Activated T-helper 2 cell treated with anti-CD3 and anti-CD28 coated beads, Interferon-gamma antibody, Interleukin-2, Interleukin-4, amounts not matched to agents 10 μg/mL and 5 μg/mL and 100 μg/mL, durations not matched to agents 14 hours and 24 hours and 36 hours (primary cell): ENCODE measurements at regions of chr19 and their contacts with region 1.

Region 1: GRCh38 chr19:54390942-54391577 is 24.2 kb upstream of the TTYH1 start:
- DNase-seq: peak; percentile 46
- H3K4me3 Mint-ChIP-seq: peak overlapping the region; percentile 27
- H3K27ac Mint-ChIP-seq: no peak overlapping the region
- H3K4me1 Mint-ChIP-seq: peaks cover 31% of the 10 kb centered on the region
- H3K27me3 Mint-ChIP-seq: peaks cover 6% of the 10 kb centered on the region

Region 2: DNA sequence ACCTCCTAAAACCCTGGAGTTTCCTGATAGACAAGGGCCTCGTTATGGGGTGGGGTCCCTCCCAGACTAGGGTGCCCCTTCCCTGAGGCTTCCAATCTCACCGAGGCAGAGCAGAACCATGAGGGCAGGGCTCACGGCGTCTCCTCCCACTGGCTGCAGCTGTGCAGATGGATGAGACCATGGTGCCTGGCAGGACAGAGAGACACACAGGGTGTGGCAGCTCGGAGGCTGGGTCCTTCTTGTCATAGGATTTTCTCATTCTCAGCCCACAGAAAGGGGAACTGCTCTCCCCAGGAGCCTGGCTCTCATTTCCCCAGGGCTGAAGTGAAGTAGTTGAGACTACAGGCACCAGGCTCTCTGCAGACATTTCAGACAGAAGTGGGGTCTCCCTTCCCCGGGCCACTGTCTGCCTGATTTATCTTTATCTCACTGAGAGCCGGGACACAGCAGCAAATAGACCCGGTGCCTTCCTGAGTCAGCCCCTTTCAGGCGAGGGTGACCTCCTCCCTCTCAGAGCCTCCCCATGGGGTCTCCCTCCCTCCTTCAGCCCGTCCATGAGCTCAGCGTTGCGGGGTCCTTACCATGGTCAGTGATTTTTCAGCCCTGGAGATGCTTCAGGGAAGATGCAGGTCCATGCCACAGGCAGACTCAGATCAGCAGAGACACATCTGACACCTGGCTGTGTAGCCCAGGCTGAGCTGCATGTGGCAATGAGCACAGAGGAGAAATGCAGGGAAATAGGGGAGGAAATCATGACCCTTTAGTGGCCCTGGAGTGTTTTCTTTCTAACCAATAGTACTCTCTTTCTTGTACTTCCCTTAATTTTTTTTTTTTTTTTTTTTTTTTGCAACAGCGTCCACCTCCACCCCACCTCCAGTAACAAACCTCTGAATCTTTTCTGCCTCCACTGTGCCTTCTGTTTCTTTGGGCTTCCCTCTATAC is 78.4 kb before region 1 on chr19 and contains the start of gene LILRA5:
- intact Hi-C with region 1: no loop called
- DNase-seq: no peak
- H3K4me3 Mint-ChIP-seq: no peak within 1 kb of the TSS
- H3K27ac Mint-ChIP-seq: no peak within 1 kb of the TSS
- H3K4me1 Mint-ChIP-seq: peaks cover 6% of the 10 kb centered on the region
- H3K27me3 Mint-ChIP-seq: peaks cover 16% of the 10 kb centered on the region
- total RNA-seq, gene LILRA5: not detected in 2 replicates

Region 3: DNA sequence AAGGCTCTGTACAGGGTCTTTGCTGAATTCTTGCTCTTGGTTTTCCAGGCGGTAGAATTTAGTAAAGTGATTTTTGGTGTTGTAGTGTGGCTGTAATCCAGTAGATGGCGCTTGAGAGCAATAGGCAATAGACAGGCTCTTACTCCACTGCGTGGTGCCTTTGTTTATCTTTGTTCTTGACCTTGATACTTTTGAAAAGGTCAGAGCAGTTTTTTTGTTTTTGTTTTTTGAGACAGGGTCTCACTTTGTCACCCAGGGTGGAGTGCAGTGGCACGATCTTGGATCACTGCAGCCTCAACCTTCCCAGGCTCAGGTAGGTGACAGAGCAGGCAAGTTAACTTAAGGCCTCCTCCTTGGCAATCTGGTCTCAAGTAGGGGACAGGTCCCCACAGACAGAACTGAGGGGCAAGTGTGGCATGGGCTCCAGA is 65.9 kb before region 1 on chr19:
- intact Hi-C with region 1: loop called (anchors 1 kb)
- DNase-seq: peak; percentile 41
- H3K4me3 Mint-ChIP-seq: no peak overlapping the region
- H3K27ac Mint-ChIP-seq: no peak overlapping the region
- H3K4me1 Mint-ChIP-seq: peaks cover 12% of the 10 kb centered on the region
- H3K27me3 Mint-ChIP-seq: peaks cover 18% of the 10 kb centered on the region

Region 4: DNA sequence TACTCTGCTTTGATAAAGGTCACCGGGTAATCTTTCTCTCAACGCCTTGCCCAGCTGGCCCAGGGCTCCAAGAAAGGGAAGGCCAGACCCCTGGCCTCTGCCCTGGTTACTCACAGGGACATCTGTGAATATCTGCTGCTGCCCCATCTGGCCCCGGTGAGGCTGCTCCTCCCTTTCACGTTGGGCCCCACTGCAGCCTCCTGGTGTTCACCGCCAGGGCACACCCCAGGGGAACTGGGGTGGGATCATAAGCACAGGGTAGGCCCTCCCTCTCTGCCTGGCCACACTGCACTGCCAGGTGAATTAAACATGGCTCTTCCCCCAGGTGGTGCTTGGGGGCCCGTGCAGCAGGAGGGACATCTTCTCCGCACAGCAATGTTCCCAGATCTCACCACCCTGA is 39.0 kb before region 1 on chr19:
- intact Hi-C with region 1: loop called (anchors 5 kb)
- DNase-seq: no peak
- H3K4me3 Mint-ChIP-seq: no peak overlapping the region
- H3K27ac Mint-ChIP-seq: no peak overlapping the region
- H3K4me1 Mint-ChIP-seq: no peaks in the 10 kb centered on the region
- H3K27me3 Mint-ChIP-seq: peaks cover 18% of the 10 kb centered on the region

Region 5: DNA sequence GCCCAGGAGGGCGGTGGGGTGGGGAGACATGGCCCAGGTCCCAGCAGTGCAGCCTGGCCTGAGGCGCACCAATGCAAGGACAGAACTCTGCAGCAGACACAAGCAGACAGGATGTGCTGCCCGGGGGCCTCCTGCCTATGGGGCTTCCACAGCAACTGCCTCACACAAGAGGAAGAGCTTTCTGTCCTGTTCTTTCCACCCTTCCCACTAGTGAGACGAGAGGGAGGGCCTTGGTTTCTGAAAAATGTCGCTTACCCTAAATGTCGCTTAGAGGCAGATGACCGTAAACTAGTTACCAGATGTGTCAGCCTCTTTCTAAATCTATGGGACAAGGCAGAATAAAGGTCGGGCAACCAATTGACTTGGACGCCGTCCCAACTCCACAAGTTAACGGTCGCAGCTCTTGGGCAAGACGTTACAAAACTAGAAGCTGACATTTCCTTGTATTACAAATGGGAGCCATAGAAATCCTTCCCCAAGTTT is 26.2 kb before region 1 on chr19 and contains the start of gene LAIR1:
- intact Hi-C with region 1: loop called (anchors 2 kb)
- DNase-seq: peak; percentile 29
- H3K4me3 Mint-ChIP-seq: peak within 1 kb of the TSS; percentile 83
- H3K27ac Mint-ChIP-seq: peak within 1 kb of the TSS; percentile 69
- H3K4me1 Mint-ChIP-seq: peaks cover 52% of the 10 kb centered on the region
- H3K27me3 Mint-ChIP-seq: peaks cover 17% of the 10 kb centered on the region
- total RNA-seq, gene LAIR1: 8.8 and 10.8 TPM in 2 replicates

Region 6: GRCh38 chr19:54373781-54374631 is 17.1 kb before region 1 on chr19:
- intact Hi-C with region 1: loop called (anchors 2 kb)
- DNase-seq: no peak
- H3K4me3 Mint-ChIP-seq: peak overlapping the region; percentile 79
- H3K27ac Mint-ChIP-seq: no peak overlapping the region
- H3K4me1 Mint-ChIP-seq: peaks cover 73% of the 10 kb centered on the region
- H3K27me3 Mint-ChIP-seq: peaks cover 25% of the 10 kb centered on the region

Region 7: GRCh38 chr19:54551950-54552912 is 161.2 kb after region 1 on chr19:
- intact Hi-C with region 1: no loop called
- DNase-seq: no peak
- H3K4me3 Mint-ChIP-seq: no peak overlapping the region
- H3K27ac Mint-ChIP-seq: no peak overlapping the region
- H3K4me1 Mint-ChIP-seq: peaks cover 4% of the 10 kb centered on the region
- H3K27me3 Mint-ChIP-seq: peaks cover 2% of the 10 kb centered on the region

Region 8: GRCh38 chr19:54573330-54573872 is 182.3 kb after region 1 on chr19 and contains the start of gene LILRA2:
- intact Hi-C with region 1: loop called (anchors 5 kb)
- DNase-seq: no peak
- H3K4me3 Mint-ChIP-seq: no peak within 1 kb of the TSS
- H3K27ac Mint-ChIP-seq: no peak within 1 kb of the TSS
- H3K4me1 Mint-ChIP-seq: peaks cover 15% of the 10 kb centered on the region
- H3K27me3 Mint-ChIP-seq: peaks cover 8% of the 10 kb centered on the region
- total RNA-seq, gene LILRA2: not detected in 2 replicates